HEK293 (cell line): ENCODE measurements at regions of chr7 and their contacts with region 1.

Region 1: GRCh38 chr7:123738356-123738755 is 10.4 kb downstream of the WASL start:
- H3K4me3 ChIP-seq: no peak overlapping the region
- H3K27ac ChIP-seq: no peak overlapping the region
- H3K4me1 ChIP-seq: no peaks in the 10 kb centered on the region
- CTCF ChIP-seq: no peak

Region 2: DNA sequence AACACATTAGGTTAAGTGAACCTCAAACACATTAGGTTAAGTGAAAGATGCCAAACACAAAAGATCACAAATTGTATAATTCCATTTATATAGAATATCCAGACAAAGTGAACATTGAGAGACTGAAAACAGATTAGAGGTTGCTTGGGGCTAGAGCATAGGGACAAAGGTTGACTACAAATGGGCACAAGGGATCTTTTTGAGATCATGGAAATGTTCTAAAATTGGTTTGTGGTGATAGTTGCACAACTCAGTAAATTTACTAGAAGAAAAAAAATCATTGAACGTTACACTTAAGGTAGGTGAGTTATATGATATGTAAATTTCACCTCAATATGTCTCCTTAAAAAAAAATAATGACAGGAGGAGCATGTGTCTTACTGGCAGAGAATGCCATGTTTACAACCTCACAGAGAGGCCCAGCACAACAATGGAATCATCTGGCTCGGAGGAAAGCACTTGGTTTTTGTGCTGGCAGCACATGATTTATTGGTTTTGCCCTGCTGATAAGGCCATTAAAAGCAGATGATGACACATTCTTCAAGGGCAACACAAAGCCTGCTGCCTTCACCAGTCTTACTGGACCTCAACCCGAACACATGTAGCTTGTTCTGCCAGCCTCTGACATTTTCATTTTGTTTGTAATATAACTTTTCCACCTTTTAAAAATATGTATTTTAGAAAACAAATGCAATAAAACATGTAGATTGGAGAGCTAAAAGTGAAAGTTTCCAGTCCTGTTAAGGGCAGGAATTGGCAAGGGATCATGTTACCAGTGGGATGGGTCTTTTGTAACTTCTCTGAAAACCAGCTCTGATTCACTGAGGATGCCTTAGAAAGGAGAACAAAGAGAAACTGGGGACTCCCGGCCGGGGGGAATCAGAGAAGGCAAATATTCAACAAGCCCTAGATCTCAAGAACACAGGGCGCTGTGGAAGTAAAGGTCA is 94.6 kb before region 1 on chr7:
- CTCF ChIA-PET with region 1: no interaction called
- POLR2A ChIA-PET with region 1: no interaction called
- H3K4me3 ChIP-seq: peak overlapping the region; percentile 10
- H3K27ac ChIP-seq: no peak overlapping the region; the same call in 1 of the 2 replicates
- H3K4me1 ChIP-seq: peaks cover 9% of the 10 kb centered on the region
- CTCF ChIP-seq: no peak

Region 3: DNA sequence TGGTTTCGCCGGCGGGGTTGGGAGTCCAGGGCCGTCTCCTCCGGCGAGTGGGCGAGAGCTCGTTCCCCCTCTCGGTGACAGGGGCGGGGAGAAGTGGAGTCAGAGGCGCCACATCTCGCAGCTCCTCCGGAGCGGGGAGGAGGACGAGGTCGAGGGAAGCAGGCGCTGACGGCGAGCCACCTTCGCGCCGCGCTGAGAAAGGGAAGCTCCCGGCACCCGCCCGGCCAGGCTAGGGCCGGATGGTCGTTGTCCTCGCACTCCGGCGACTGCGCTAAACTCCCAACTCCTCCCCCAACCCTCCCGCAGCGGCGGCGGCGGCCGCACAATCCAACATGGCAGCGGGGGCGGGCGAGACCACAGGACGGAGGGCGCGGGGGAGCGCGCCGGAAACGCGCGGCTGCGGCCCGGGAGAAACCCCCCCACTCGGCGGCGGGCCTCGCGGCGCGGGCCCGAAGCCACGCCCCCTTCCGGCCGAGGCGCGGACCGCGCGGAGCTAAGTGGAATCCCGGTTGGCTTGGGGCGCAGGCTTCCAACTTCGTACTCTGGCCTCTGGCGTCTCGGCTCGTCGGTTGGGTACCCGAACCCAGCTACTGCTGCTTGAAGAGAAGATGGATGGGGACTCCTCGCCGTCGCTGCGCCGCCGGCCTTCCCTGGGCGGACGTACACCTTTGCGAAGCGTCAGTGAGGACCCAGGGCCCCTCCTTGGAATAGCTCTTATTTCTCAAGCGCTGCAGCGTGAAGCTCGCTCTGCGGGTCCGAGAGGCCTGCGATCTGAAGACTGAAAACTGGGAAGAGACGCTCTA is 10.6 kb after region 1 on chr7 and contains the start of gene WASL:
- CTCF ChIA-PET with region 1: interaction called, 3 read pairs
- POLR2A ChIA-PET with region 1: interaction called, 13 read pairs
- H3K4me3 ChIP-seq: peak within 1 kb of the TSS; percentile 92
- H3K27ac ChIP-seq: peak within 1 kb of the TSS; percentile 97
- H3K4me1 ChIP-seq: peaks cover 18% of the 10 kb centered on the region
- CTCF ChIP-seq: no peak